PC-3 (cell line): ENCODE measurements at regions of chr3 and their contacts with region 1.

Region 1: DNA sequence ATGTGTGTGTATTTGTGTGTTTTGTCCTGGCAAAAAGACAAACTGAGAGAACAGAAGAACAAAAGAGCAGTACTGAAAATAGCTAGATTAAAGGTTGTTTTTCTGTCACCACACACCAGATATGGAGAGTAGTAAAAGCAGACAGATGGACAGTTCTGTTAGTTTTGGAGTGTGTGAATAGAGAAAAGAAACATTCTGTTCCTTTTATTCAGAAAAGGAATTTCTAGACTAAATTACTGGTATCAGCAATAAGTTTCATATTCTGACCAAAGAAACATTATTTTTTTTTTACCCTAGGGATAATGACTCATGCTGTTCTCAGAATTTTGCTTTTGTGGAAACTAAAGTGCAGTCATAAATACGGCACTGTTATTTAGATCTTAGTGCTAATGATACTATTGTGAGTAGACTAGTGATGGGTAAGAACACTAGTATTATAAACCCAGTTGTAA is 32.9 kb downstream of the PIK3CA start:
- DNase-seq: peak; percentile 19
- ATAC-seq: no peak; the same call in 1 of the 2 replicates
- H3K4me3 ChIP-seq: no peak overlapping the region
- H3K27ac ChIP-seq: no peak overlapping the region
- H3K4me1 ChIP-seq: peaks cover 8% of the 10 kb centered on the region; the same call in 1 of the 2 replicates
- H3K27me3 ChIP-seq: no peaks in the 10 kb centered on the region
- CTCF ChIP-seq: no peak

Region 2: GRCh38 chr3:179166561-179167201 is 14.4 kb before region 1 on chr3:
- CTCF ChIA-PET with region 1: no interaction called
- POLR2A ChIA-PET with region 1: no interaction called
- intact Hi-C with region 1: loop called (anchors 2 kb)
- DNase-seq: no peak
- ATAC-seq: no peak
- H3K4me3 ChIP-seq: no peak overlapping the region
- H3K27ac ChIP-seq: no peak overlapping the region
- H3K4me1 ChIP-seq: no peaks in the 10 kb centered on the region
- H3K27me3 ChIP-seq: no peaks in the 10 kb centered on the region
- CTCF ChIP-seq: no peak

Region 3: GRCh38 chr3:179493260-179493659 is 312.2 kb after region 1 on chr3:
- CTCF ChIA-PET with region 1: no interaction called
- POLR2A ChIA-PET with region 1: no interaction called
- intact Hi-C with region 1: no loop called
- DNase-seq: no peak
- ATAC-seq: no peak
- H3K4me3 ChIP-seq: no peak overlapping the region
- H3K27ac ChIP-seq: no peak overlapping the region
- H3K4me1 ChIP-seq: no peaks in the 10 kb centered on the region
- H3K27me3 ChIP-seq: 0 out of 2 replicates have a peak, but pooled peaks cover 8% of the 10 kb centered on the region
- CTCF ChIP-seq: no peak